ENCODE measurements at regions of chr15 and their contacts with region 1.

Region 1: GRCh38 chr15:35519541-35520149 is 26.3 kb downstream of the DPH6 start:
- DNase-seq: no peak
- H3K4me3 ChIP-seq: no peak overlapping the region
- H3K27ac ChIP-seq: peak overlapping the region in 1 of 2 donors; percentile 42
- H3K4me1 ChIP-seq: no peaks in the 10 kb centered on the region
- H3K27me3 ChIP-seq: no peaks in the 10 kb centered on the region
- CTCF ChIP-seq: peak; percentile 51 to 69 (median 59)

Region 2: DNA sequence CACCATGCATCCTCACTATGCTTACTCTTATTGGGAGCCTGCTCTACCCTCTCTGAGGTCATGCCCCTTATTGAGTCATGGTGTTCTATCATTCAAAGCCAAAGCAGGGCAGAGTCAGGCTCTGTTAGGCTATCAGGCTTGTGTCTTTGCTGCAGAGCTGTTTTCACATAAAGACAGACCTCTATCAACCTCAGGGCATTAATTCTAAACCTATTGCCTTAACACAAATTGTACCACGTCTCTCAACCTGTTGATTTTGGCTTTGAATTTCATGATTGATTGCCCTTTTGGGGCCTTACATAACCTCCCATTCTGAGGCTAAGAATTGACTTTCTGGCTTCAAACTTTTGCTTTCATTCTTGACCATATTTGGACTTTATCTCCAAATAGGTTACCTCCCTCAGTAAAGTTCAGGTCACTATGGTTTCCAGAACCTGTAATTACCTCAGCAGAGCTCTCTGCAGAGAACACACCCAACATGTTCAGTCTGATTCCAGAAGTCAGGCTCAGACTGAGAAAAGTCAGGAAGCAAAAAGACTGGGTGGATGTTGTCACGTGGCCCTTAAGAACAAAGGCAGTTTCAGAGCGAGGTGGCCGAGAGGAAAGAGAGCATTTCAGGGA is 213.2 kb before region 1 on chr15:
- intact Hi-C with region 1: loop called (anchors 10 kb)
- DNase-seq: no peak
- H3K4me3 ChIP-seq: no peak overlapping the region
- H3K27ac ChIP-seq: peak overlapping the region; percentile 80 to 85
- H3K4me1 ChIP-seq: peaks cover 6 to 28% of the 10 kb centered on the region in 2 donors
- H3K27me3 ChIP-seq: no peaks in the 10 kb centered on the region
- CTCF ChIP-seq: no peak

Region 3: GRCh38 chr15:35583863-35584528 is 64.4 kb after region 1 on chr15:
- intact Hi-C with region 1: no loop called
- DNase-seq: no peak
- H3K4me3 ChIP-seq: no peak overlapping the region
- H3K27ac ChIP-seq: peak overlapping the region; percentile 50 to 61
- H3K4me1 ChIP-seq: peaks cover 4 to 8% of the 10 kb centered on the region in 2 donors
- H3K27me3 ChIP-seq: no peaks in the 10 kb centered on the region
- CTCF ChIP-seq: no peak

Region 4: GRCh38 chr15:35912196-35912595 is 392.6 kb after region 1 on chr15:
- intact Hi-C with region 1: loop called (anchors 5 kb)
- DNase-seq: no peak
- H3K4me3 ChIP-seq: no peak overlapping the region
- H3K27ac ChIP-seq: no peak overlapping the region
- H3K4me1 ChIP-seq: no peaks in the 10 kb centered on the region
- H3K27me3 ChIP-seq: no peaks in the 10 kb centered on the region
- CTCF ChIP-seq: peak in 2 of 3 experiments; percentile 6 to 24

Region 5: DNA sequence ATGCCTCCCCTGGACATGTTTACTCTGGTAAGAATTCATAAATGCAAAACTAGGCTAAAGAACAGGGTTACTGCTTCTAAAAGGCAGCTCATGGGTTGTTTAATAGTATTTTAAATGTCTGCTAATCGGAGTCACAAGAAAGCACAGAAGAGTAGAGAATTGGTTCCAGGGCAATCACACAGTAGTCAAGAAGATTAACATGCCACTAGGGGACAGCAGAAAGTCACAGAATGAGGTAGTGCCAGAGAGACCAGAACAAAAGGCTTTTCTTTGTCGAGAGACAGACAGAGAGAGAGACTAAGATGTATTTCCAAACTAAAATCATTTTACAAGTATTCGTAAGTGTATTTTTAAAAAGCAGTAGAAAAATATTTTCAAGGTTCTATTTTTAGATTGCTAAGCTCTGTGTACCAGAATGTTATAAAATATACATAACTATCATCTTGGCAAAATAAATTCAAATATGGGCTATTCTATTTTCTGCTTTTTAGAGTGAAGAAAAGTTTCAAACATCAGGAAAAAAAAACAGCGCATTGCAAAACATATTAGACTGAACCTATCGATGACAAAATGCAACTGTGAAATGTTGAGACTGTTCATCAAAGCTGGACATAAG is 981.5 kb after region 1 on chr15:
- intact Hi-C with region 1: loop called (anchors 10 kb)
- DNase-seq: no peak
- H3K4me3 ChIP-seq: no peak overlapping the region
- H3K27ac ChIP-seq: no peak overlapping the region
- H3K4me1 ChIP-seq: peaks cover 0 to 12% of the 10 kb centered on the region in 2 donors
- H3K27me3 ChIP-seq: no peaks in the 10 kb centered on the region
- CTCF ChIP-seq: peak; percentile 7 to 80 (median 76)

Region 6: DNA sequence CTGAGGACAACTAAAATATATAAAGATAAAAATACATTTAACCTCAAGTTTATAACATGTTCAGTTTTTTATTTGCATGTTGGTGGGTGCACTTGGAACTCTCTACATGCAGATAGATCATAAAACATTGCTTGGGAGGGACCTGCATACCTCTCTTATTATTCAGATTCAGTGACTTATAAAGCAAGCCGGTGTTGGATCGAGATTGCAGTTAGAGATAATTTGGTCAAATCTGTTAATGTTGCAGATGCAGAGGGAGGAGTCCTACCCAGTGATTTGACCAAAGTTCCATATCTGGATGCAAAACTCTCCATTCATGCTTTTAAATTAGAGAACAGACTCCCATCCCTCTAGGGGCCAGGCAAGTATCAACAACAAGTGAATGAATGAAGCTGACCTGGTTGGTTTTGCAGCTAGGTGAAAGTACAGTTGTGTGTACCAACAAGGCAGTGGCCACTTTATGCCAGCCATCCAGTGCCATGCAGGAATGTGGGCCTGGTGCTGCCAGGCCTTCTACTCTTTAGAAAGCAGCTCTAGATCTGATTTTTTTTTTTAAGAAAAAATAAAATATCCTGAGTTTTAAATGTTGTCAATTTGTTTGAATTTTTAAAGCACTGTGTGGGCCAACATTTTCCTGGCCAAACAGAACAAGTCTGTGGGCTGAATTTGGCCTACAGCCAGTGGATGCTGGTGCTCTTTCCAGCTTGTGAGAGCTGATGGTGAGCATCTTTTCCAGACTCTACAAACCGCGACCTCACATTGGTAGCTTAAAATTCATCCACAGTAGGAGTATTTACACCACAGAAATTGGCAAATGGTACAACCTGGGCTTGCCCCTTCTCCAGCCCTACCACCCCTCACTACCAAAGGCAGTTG is 1072.1 kb after region 1 on chr15:
- intact Hi-C with region 1: loop called (anchors 10 kb)
- DNase-seq: no peak
- H3K4me3 ChIP-seq: no peak overlapping the region
- H3K27ac ChIP-seq: peak overlapping the region in 1 of 2 donors; percentile 12
- H3K4me1 ChIP-seq: peaks cover 10 to 13% of the 10 kb centered on the region in 2 donors
- H3K27me3 ChIP-seq: no peaks in the 10 kb centered on the region
- CTCF ChIP-seq: no peak

Region 7: GRCh38 chr15:36883713-36884517 is 1364.3 kb after region 1 on chr15:
- intact Hi-C with region 1: loop called (anchors 2 kb)
- DNase-seq: peak in 1 of 2 donors; percentile 88
- H3K4me3 ChIP-seq: peak overlapping the region; percentile 40 to 47
- H3K27ac ChIP-seq: no peak overlapping the region
- H3K4me1 ChIP-seq: peaks cover 0 to 6% of the 10 kb centered on the region in 2 donors
- H3K27me3 ChIP-seq: no peaks in the 10 kb centered on the region
- CTCF ChIP-seq: peak; percentile 78 to 86 (median 80)